ENCODE measurements at regions of chr16 and their contacts with region 1.

Region 1: GRCh38 chr16:21184834-21185233 is 26.4 kb downstream of the LDAF1 start:
- DNase-seq: no peak
- ATAC-seq: no peak
- H3K4me3 Mint-ChIP-seq: no peak overlapping the region
- H3K27ac Mint-ChIP-seq: no peak overlapping the region
- H3K4me1 Mint-ChIP-seq: no peaks in the 10 kb centered on the region
- H3K27me3 Mint-ChIP-seq: peaks cover 2% of the 10 kb centered on the region; the same call in 1 of the 2 replicates
- CTCF ChIP-seq: no peak

Region 2: GRCh38 chr16:21083729-21084268 is 101.0 kb before region 1 on chr16:
- CTCF ChIA-PET with region 1: no interaction called
- POLR2A ChIA-PET with region 1: no interaction called
- DNase-seq: peak; percentile 81
- ATAC-seq: peak; percentile 98
- H3K4me3 Mint-ChIP-seq: no peak overlapping the region
- H3K27ac Mint-ChIP-seq: 0 out of 2 replicates have a peak overlapping the region, but pooled peaks have one; percentile 18
- H3K4me1 Mint-ChIP-seq: 0 out of 2 replicates have a peak, but pooled peaks cover 3% of the 10 kb centered on the region
- H3K27me3 Mint-ChIP-seq: no peaks in the 10 kb centered on the region
- CTCF ChIP-seq: peak; percentile 71

Region 3: DNA sequence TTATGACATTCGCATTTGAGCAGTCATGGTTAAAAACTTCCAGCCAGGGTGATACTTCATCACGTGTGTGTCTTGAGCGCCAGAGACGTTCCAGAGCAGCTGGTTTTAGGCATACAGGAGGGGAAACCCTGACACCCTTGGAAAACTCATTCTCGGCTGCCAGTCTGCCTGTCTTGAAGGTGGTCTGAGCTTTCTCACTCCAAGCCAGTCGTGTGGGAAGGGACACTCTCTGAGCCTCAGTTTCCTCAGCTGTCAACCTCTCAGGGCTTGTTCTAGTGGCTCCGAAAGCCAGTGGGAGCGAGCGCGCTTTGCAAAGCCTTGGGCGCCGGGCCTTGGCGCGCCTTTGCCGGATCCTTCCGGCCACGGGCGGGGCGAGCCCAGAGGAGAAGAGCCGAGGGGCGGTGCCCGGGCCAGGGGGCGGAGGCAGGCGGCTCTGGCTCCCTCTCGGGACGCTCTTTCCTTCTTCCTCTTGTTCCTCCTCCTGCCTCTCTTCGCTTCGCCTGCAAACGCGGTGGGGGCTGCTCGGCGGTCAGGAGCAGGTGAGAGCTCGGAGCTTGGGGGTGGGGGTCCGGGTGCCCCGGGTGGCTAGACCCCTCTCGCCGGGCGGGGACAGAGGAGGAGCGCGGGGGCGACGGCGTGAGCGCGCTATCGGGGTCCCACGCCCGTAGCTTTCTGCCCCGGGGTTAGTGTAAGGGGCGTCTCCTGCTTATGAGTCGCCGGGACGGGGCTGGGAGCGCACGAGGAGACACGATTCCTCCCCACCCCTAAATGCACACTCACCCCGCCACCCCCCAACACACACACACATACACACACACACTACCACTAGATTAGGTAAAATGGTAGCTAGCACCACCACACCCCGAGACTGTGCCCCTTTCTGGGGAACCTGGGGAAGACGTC is 26.4 kb before region 1 on chr16 and contains the start of gene LDAF1:
- CTCF ChIA-PET with region 1: interaction called, 10 read pairs
- POLR2A ChIA-PET with region 1: interaction called, 3 read pairs
- DNase-seq: peak; percentile 89
- ATAC-seq: peak; percentile 84
- H3K4me3 Mint-ChIP-seq: peak within 1 kb of the TSS; percentile 86
- H3K27ac Mint-ChIP-seq: peak within 1 kb of the TSS; percentile 17
- H3K4me1 Mint-ChIP-seq: peaks cover 18% of the 10 kb centered on the region
- H3K27me3 Mint-ChIP-seq: peaks cover 9% of the 10 kb centered on the region
- CTCF ChIP-seq: no peak
- total RNA-seq, gene LDAF1: 34.6 to 42.8 TPM (median 36.4 TPM) in 3 replicates

Region 4: DNA sequence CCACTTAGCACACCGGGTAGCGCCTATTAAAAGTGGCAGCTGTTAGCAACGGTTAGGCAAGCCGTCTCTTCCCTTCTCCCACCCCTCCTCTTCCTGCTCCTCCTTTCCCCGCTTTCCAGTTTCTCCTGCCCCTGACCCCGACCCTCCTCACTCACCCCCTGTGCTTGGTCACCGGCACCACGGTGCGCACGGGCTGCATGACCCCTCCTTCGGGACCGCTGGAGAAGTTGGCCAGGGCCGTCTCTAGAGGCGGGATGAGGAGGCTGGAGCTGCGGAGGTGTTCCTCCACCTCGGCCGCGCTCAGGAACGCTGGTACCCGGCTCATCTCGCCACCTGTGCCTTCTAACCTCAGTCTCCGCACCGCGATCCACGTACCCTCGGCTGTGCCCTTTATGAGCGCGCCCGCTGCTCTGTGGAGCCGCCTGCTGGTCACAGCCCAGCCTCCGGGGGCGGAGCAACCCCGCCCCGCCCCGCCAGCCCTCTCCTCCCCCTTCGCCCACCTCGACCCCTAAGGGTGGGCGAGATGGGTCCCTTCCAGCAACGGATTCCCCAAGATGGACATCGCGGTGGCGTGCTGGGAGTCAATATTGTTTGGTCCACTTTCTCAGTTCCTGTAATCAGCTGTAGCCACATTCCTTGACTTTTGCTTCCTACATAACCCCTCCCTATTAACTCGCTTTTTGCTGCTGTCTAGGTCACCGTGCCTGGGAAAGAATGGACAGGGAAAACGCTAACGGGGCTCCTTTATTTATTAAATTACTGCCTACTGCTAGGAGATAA is 93.3 kb after region 1 on chr16 and contains the start of gene CRYM:
- CTCF ChIA-PET with region 1: interaction called, 72 read pairs
- POLR2A ChIA-PET with region 1: no interaction called
- DNase-seq: peak; percentile 82
- ATAC-seq: peak; percentile 98
- H3K4me3 Mint-ChIP-seq: peak within 1 kb of the TSS; percentile 80
- H3K27ac Mint-ChIP-seq: no peak within 1 kb of the TSS
- H3K4me1 Mint-ChIP-seq: peaks cover 27% of the 10 kb centered on the region
- H3K27me3 Mint-ChIP-seq: peaks cover 19% of the 10 kb centered on the region
- CTCF ChIP-seq: peak; percentile 78
- total RNA-seq, gene CRYM: 12.7 to 14.9 TPM (median 12.9 TPM) in 3 replicates

Region 5: DNA sequence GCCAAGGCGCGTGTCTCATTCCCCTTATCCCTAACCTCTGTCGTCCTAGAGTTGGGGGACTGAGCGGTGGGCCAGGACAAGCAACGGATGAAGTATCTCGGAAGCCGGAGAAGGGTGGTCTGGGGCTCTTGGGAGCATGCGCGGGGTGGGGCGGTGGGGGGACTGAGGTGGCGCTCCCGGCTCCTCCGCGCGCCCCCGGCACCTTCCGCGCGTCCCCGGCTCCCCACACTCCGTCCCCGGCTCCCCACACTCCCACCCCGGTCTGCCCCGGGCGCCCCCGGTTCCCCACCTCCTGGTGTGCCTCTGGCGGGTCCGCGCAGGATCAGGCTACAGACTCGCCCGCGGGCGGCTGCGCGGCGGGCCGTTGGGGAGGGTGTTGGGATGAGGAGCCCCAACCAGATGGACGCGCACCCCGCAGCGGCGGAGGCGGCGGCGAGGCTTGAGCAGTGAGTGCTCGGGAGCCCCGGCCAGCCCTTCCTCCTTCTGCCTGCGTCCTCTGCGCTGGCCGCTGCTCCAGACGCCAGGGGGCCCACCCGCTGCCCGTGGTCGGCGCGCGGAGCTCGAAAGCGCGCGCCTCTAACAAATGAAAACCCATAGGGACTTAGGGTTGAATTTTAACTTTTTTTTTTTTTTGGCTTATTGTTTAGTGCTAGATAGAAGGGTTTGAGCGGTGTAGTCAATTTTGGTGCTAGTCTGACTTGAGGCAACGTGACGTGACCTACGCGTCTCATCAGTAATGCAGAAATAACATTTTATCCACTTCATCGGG is 98.9 kb after region 1 on chr16:
- CTCF ChIA-PET with region 1: interaction called, 72 read pairs
- POLR2A ChIA-PET with region 1: interaction called, 3 read pairs
- DNase-seq: peak; percentile 79
- ATAC-seq: peak; percentile 95
- H3K4me3 Mint-ChIP-seq: peak overlapping the region; percentile 70
- H3K27ac Mint-ChIP-seq: no peak overlapping the region
- H3K4me1 Mint-ChIP-seq: peaks cover 10% of the 10 kb centered on the region
- H3K27me3 Mint-ChIP-seq: peaks cover 24% of the 10 kb centered on the region
- CTCF ChIP-seq: no peak

Region 6: DNA sequence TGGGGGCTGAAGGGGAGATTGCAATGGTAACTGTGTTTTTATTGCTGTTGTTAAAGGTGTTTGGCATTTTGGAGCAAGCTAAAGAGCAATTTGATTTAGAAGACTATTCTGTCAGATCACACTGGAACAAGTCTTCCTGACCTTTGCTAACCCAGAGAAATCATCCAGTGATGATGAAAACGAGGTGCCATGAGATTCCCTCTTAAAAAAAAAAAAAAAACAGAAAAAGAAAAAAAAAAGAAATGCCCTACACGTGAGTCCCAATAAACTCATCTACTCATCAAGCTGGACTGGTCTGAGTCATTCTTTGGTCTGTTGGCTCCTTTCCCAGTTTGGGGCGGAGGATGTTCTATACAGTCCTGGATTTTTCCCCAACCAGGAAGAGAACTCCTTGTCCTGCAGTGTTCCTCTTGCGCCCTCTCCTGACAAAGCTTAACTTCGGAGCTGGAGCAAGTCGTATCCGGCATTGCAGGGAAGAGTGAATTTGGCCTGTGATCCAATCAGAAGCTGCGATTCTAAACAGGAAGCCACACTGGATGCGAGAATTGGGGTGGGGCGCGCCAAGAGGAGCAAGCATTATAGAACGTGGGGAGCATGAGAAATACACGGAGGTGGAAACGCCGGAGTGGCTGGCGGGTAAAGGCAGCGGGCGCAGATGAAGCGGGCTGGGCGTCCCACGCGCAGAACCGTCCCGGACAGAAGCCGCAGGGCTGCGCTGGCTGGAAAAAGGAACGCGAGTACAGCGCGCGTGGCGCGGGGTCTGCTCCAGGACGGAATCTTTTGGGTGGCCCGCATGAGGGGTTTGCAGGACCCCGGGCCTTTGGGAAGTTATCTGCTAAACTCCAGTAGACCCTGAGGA is 115.7 kb after region 1 on chr16:
- CTCF ChIA-PET with region 1: interaction called, 186 read pairs
- POLR2A ChIA-PET with region 1: interaction called, 15 read pairs
- DNase-seq: peak; percentile 86
- ATAC-seq: peak; percentile 86
- H3K4me3 Mint-ChIP-seq: peak overlapping the region; percentile 91
- H3K27ac Mint-ChIP-seq: peak overlapping the region; percentile 24; the same call in 1 of the 2 replicates
- H3K4me1 Mint-ChIP-seq: peaks cover 31% of the 10 kb centered on the region
- H3K27me3 Mint-ChIP-seq: peaks cover 45% of the 10 kb centered on the region
- CTCF ChIP-seq: peak; percentile 38; the same call in 1 of the 2 replicates

Measured in WTC11 (cell line).